ENCODE measurements at regions of chr10 and their contacts with region 1.

Region 1: GRCh38 chr10:34528320-34528719 is 286.8 kb downstream of the PARD3 start:
- DNase-seq: peak; percentile 74 to 94
- H3K4me3 ChIP-seq: peak overlapping the region; percentile 26; the same call in 1 of the 2 replicates
- H3K27ac ChIP-seq: peak overlapping the region; percentile 68
- H3K4me1 ChIP-seq: peaks cover 33% of the 10 kb centered on the region
- H3K27me3 ChIP-seq: no peaks in the 10 kb centered on the region
- CTCF ChIP-seq: no peak

Region 2: DNA sequence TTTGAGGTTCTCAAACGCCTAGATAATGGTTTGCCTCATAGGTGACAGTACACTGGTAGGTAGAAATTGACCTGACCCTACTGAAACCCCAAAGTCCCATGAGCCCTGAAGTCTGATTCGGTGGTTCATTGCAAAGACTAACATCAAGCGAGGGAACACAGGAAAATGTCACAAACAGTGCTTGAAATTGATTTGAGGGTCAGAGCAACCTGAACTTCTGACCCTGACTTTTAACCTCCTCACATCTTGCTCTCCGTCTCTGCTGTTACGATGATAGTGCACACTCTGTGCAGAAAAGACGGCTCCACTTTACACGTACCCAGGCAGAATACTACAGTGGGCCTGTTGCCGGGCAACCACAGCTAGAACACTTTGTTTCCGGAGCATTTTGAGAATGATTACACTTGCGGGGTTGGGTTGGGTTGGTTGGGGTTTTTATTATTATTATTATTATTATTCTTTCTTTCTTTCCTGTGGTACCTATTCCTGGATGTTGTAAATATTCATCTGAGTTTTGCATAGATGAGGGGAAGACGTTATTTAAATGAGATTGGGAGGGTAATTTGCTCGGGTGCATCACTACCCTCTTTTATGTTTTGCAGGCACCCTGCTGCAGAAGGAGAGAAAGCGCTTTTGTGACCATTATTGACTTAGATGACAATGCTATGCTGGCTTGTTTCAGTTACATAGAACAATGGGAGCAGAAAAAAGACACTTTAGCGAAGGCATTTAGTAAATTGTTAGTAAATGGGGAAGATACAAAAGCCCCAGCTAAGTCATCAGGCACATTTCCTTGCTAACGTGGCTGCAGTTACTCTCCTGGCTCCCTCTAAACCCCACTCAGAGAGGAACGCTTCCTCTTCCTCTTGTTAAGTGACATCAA is 755.7 kb before region 1 on chr10:
- CTCF ChIA-PET with region 1: no interaction called
- POLR2A ChIA-PET with region 1: no interaction called
- intact Hi-C with region 1: no loop called
- DNase-seq: no peak
- H3K4me3 ChIP-seq: no peak overlapping the region
- H3K27ac ChIP-seq: no peak overlapping the region
- H3K4me1 ChIP-seq: no peaks in the 10 kb centered on the region
- H3K27me3 ChIP-seq: no peaks in the 10 kb centered on the region
- CTCF ChIP-seq: no peak

Region 3: DNA sequence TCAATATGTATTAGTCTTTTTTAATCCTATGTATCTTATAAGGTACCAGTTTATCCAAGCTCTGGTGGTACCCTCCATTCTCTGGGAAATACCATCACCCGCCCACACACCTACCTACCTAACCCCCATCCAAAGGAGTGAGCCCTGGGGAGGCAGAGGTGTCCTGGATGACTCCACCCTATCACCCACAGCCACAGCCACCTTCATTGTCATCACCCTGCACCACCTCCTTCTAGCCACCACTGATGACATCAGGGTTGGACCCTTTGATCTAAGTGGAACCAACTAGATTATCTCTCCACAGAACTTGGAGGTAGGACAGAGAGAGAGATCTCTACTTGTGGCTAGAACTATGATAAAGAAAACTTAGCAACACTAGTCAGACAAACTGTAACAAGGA is 27.3 kb after region 1 on chr10:
- CTCF ChIA-PET with region 1: no interaction called
- POLR2A ChIA-PET with region 1: no interaction called
- intact Hi-C with region 1: no loop called
- DNase-seq: no peak
- H3K4me3 ChIP-seq: no peak overlapping the region
- H3K27ac ChIP-seq: no peak overlapping the region
- H3K4me1 ChIP-seq: no peaks in the 10 kb centered on the region
- H3K27me3 ChIP-seq: no peaks in the 10 kb centered on the region
- CTCF ChIP-seq: no peak

Region 4: DNA sequence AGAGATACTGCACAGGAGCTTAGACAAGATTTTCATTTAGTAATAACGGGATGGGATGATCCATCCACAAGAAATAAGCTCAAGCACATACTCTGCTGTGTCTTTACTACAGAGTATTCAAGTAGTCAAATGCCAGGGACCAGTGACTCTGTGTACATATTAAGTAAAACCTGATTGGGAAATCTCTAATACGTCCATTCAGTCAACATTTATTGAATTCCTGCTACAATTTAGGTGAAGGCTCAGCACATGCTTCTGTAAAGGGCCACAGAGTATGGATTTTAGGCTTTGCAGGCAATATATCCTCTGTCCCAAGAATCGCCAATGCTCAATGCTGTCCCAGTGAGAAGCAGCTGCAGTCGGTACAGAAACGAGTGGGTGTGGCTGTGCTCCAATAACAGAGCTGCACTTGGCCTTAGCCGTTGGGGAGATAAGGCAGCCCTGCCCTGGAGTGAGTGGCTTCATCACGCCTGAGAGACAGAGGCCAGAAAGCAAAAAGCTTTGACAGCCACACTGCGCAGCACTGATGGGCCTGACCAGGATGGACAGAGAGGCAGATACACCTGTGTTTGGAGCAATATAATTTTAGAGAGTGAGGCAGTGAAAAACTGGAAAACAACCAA is 100.0 kb after region 1 on chr10:
- CTCF ChIA-PET with region 1: interaction called, 14 read pairs
- POLR2A ChIA-PET with region 1: no interaction called
- intact Hi-C with region 1: no loop called
- DNase-seq: no peak
- H3K4me3 ChIP-seq: no peak overlapping the region
- H3K27ac ChIP-seq: no peak overlapping the region
- H3K4me1 ChIP-seq: no peaks in the 10 kb centered on the region
- H3K27me3 ChIP-seq: no peaks in the 10 kb centered on the region
- CTCF ChIP-seq: no peak